Calu3 (cell line): ENCODE measurements at regions of chr12 and their contacts with region 1.

Region 1: DNA sequence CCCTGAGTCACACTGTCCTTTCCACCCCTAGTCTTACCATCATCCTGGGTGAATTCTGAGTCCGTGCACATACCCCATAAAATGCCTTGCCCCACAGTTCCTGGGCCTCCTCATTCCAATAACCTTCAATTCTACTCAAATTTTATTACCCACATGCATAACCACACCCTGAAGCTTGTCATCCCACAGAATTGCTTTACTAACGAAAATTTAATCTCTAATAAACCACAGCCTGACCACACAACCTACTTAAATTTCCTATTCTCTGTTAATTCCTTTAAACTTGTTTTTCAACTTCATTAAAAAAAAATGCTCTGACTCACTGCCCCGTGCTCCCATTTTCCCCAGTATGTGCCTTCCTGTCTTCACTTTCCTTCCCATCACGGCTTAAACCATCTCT is 205.9 kb downstream of the PHLDA1 start:
- DNase-seq: peak; percentile 63
- H3K4me3 Mint-ChIP-seq: no peak overlapping the region
- H3K27ac Mint-ChIP-seq: no peak overlapping the region
- H3K4me1 Mint-ChIP-seq: no peaks in the 10 kb centered on the region
- H3K27me3 Mint-ChIP-seq: no peaks in the 10 kb centered on the region
- CTCF ChIP-seq: no peak

Region 2: GRCh38 chr12:75712252-75712651 is 113.4 kb before region 1 on chr12:
- CTCF ChIA-PET with region 1: no interaction called
- intact Hi-C with region 1: loop called (anchors 5 kb)
- DNase-seq: peak; percentile 51
- H3K4me3 Mint-ChIP-seq: no peak overlapping the region
- H3K27ac Mint-ChIP-seq: peak overlapping the region; percentile 91
- H3K4me1 Mint-ChIP-seq: peaks cover 73% of the 10 kb centered on the region
- H3K27me3 Mint-ChIP-seq: no peaks in the 10 kb centered on the region
- CTCF ChIP-seq: no peak

Region 3: GRCh38 chr12:75862692-75863471 is 37.2 kb after region 1 on chr12:
- CTCF ChIA-PET with region 1: no interaction called
- intact Hi-C with region 1: loop called (anchors 2 kb)
- DNase-seq: no peak
- H3K4me3 Mint-ChIP-seq: no peak overlapping the region
- H3K27ac Mint-ChIP-seq: peak overlapping the region; percentile 76
- H3K4me1 Mint-ChIP-seq: peaks cover 62% of the 10 kb centered on the region
- H3K27me3 Mint-ChIP-seq: no peaks in the 10 kb centered on the region
- CTCF ChIP-seq: no peak

Region 4: GRCh38 chr12:75933101-75933500 is 107.4 kb after region 1 on chr12:
- CTCF ChIA-PET with region 1: interaction called, 3 read pairs
- intact Hi-C with region 1: loop called (anchors 2 kb)
- DNase-seq: peak; percentile 69
- H3K4me3 Mint-ChIP-seq: peak overlapping the region; percentile 4
- H3K27ac Mint-ChIP-seq: peak overlapping the region; percentile 43
- H3K4me1 Mint-ChIP-seq: peaks cover 34% of the 10 kb centered on the region
- H3K27me3 Mint-ChIP-seq: no peaks in the 10 kb centered on the region
- CTCF ChIP-seq: no peak

Region 5: GRCh38 chr12:76031537-76032073 is 205.9 kb after region 1 on chr12 and contains the start of gene PHLDA1:
- CTCF ChIA-PET with region 1: interaction called, 4 read pairs
- intact Hi-C with region 1: loop called (anchors 2 kb)
- DNase-seq: peak; percentile 99
- H3K4me3 Mint-ChIP-seq: peak within 1 kb of the TSS; percentile 86
- H3K27ac Mint-ChIP-seq: peak within 1 kb of the TSS; percentile 98
- H3K4me1 Mint-ChIP-seq: peaks cover 38% of the 10 kb centered on the region
- H3K27me3 Mint-ChIP-seq: no peaks in the 10 kb centered on the region
- CTCF ChIP-seq: peak; percentile 43
- total RNA-seq, gene PHLDA1: 143 and 151 TPM in 2 replicates